ENCODE measurements at regions of chr2 and their contacts with region 1.

Region 1: DNA sequence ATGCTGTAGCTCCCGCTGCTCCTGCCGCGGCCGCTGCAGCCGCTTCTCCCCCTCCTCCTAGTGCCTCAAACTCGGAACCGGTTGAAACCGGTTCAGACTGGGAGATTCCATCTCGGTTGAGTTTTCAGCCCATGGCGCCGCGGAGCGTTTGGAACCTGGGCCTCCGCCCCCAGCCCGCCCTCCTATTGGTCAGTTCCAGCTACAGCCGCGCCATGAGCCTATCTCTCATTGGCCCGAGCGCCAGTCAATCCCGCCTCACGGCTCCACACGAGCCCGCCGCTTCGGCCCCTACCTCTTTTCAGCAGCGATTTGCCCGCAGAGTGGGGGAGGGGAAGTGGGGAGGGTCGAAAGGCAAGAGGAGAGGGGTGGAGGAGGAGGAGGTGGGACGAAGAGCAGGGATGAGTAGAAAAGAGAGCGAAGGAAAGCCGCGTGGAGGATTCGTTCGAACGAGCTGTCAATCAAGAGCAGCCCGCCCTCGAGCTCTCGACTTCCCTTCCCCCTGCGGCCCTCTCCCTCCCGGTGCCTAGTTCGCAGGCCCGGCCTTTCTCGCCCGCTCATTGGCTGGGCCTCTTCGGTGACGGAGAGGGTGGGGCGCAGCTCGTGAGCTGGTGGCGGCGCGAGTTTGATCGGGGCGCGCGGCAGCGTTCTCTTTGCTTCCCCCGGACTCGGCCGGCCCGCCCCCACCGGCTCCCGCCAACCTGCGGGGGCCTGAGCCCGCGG is at the start of gene XPO1:
- DNase-seq: peak; percentile 99
- ATAC-seq: peak; percentile 80 to 82
- H3K4me3 ChIP-seq: peak within 1 kb of the TSS; percentile 73 to 94 (median 82)
- H3K27ac ChIP-seq: peak within 1 kb of the TSS; percentile 97 to 99 (median 99)
- H3K4me1 ChIP-seq: peaks cover 29 to 30% of the 10 kb centered on the region in 2 donors
- H3K27me3 ChIP-seq: no peaks in the 10 kb centered on the region
- CTCF ChIP-seq: peak in 2 of 5 experiments; percentile 6 to 10
- POLR2A ChIP-seq: peak; percentile 90 to 91
- total RNA-seq, gene XPO1: 34.3 to 69.1 (median 56.3) TPM

Region 2: DNA sequence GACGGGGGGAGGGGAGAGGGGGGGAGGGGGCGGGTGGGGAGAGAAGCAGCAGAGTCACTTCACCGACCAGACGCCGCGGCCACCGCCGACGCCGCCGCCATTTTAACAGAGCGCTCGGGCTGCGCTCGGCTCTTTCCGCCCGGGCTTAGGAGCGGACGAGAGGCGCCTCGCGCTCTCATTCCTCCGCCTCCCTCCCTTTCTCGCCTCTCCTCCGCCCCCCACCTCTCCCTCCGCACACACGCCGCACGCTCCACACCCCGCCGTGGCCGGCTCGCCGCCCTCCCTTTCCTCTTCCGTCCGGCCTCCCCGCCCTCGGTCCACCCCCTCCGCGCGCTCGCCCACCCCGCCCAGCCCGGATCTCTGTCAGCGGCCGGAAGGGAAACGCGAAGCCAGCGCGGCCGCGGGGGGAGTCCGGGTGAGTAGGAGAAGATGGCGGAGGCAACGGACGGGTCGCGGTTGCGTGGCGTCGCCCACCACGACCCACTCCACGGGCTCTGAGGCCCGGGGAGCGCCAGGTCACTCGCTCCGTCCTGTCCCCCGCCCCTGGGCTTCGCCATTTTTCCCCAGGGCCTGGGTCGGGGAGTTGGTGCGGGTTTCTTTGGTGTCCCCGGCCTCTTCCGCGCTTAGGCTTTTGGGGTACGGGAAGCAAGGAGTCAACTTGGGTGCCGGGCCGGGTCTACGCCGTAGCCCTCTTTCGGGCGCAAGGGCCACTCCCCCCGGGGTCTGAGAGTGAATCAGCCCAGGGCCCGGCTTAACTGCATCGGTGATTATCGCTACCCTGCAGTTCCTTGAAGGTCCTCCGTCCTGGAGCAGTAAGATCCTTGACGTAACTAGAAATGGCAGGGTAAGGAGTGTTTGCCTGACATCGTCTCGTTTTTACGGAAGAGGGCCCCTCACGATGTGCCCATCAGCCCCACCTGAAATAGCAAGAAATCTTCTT is 67.1 kb before region 1 on chr2 and contains the start of gene USP34:
- in situ Hi-C with region 1: loop called in 1 of 4 experiments (anchors 10 kb)
- intact Hi-C with region 1: loop called (anchors 1 kb)
- DNase-seq: peak; percentile 91 to 92
- ATAC-seq: peak; percentile 78 to 81
- H3K4me3 ChIP-seq: peak within 1 kb of the TSS; percentile 78 to 98 (median 86)
- H3K27ac ChIP-seq: peak within 1 kb of the TSS; percentile 95 to 100 (median 98)
- H3K4me1 ChIP-seq: peaks cover 29 to 38% of the 10 kb centered on the region in 2 donors
- H3K27me3 ChIP-seq: no peaks in the 10 kb centered on the region
- CTCF ChIP-seq: peak in 2 of 5 experiments; percentile 12 to 26
- POLR2A ChIP-seq: peak; percentile 86 to 90
- total RNA-seq, gene USP34: 64.5 to 150 (median 76.3) TPM

Region 3: DNA sequence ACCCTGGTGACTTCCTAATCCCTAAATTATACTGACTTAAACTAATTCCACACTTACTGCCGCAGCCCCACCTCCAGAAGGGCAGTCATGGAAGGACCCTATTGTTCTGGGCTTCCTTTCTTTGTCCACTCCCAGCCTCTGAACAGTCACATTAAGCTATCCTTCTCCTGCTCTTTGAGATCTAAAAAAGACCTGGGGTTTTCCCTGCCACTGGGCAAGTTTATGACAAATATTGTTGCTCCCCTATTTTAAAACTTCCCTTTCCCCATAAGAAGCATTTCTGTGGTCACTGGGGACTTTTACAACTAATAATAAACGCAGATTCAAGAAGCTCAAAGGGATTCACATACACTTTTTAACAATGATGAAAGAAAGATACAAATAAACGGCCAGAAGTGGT is 47.0 kb after region 1 on chr2:
- in situ Hi-C with region 1: no loop called
- intact Hi-C with region 1: no loop called
- DNase-seq: no peak
- ATAC-seq: no peak
- H3K4me3 ChIP-seq: no peak overlapping the region
- H3K27ac ChIP-seq: no peak overlapping the region
- H3K4me1 ChIP-seq: no peaks in the 10 kb centered on the region
- H3K27me3 ChIP-seq: no peaks in the 10 kb centered on the region
- CTCF ChIP-seq: no peak
- POLR2A ChIP-seq: no peak

Region 4: DNA sequence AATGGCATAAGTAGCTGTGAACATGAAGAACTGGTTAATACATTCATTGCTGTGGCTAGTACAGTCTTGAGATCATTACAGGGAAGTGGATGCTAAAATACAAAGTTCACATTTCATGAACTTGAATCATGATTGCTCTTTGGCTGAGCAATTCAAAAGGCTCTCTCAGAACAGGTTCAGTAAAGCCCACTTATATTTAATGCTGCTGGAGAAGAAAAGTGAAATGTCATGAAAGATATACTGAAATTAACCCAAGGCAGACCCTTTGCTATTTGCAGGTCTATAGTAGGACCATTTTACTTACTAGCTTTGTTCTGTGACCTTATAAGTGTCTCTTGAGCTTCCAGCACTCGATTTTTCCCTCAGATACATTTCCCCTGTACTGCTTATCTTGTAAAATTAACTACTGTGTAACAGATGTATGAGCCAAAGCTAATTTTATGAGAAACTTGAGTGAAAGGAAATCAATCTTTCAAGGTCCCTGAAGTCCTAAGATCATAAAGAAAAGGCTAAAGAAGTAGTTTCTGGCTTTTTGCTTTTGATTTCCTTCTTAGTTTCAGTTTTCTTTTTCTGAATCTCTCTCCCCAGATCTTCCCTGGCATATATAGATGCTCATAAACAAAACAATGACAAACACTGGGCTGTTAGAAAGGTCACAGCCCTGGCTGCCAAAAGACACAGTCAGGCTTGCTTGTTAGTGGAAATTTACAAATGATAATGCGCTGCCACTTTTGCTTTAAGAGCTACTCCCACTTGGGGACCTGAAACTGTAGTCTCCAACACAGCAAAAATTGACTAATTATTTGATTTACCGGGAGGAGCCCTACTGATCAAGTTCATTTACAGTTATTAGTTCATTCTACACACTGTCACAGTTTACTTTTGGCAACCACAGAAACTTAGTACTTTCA is 132.5 kb after region 1 on chr2:
- in situ Hi-C with region 1: no loop called
- intact Hi-C with region 1: loop called (anchors 5 kb)
- DNase-seq: peak; percentile 56 to 74
- ATAC-seq: peak; percentile 93 to 96
- H3K4me3 ChIP-seq: peak overlapping the region; percentile 24 to 51 (median 38)
- H3K27ac ChIP-seq: peak overlapping the region; percentile 85 to 88 (median 86)
- H3K4me1 ChIP-seq: peaks cover 17 to 19% of the 10 kb centered on the region in 2 donors
- H3K27me3 ChIP-seq: no peaks in the 10 kb centered on the region
- CTCF ChIP-seq: no peak
- POLR2A ChIP-seq: no peak

Region 5: DNA sequence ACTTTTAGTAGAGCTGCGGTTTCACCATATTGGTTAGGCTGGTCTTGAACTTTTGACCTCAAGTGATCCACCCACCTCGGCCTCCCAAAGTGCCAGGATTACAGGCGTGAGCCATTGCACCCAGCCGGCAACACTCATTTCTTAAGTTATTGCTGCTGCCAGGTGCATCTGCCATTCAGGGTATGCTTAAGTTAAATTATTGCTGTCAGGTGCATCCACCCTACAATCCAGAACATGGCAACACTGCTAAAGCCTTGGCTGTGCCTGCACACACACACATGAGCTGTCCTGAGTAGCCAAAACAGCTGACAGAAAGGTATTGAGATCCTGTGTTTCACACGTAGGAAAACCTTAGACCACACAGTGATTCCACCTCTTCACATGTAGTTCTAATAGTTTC is 167.3 kb after region 1 on chr2:
- in situ Hi-C with region 1: no loop called
- intact Hi-C with region 1: loop called (anchors 2 kb)
- DNase-seq: peak; percentile 85 to 93
- ATAC-seq: peak; percentile 82 to 84
- H3K4me3 ChIP-seq: no peak overlapping the region
- H3K27ac ChIP-seq: peak overlapping the region; percentile 86 to 98 (median 92)
- H3K4me1 ChIP-seq: peaks cover 28 to 51% of the 10 kb centered on the region in 2 donors
- H3K27me3 ChIP-seq: no peaks in the 10 kb centered on the region
- CTCF ChIP-seq: no peak
- POLR2A ChIP-seq: peak in 1 of 2 donors; percentile 60

Measured in gastrocnemius medialis (tissue), 4 donors.